ENCODE measurements at regions of chr6 and their contacts with region 1.

Region 1: GRCh38 chr6:12605888-12606345 is 110.7 kb upstream of the PHACTR1 start:
- DNase-seq: peak; percentile 90
- ATAC-seq: peak; percentile 66
- H3K4me3 ChIP-seq: 0 out of 2 replicates have a peak overlapping the region, but pooled peaks have one; percentile 28
- H3K27ac ChIP-seq: peak overlapping the region; percentile 41
- H3K4me1 ChIP-seq: peaks cover 46% of the 10 kb centered on the region
- H3K27me3 ChIP-seq: no peaks in the 10 kb centered on the region
- CTCF ChIP-seq: peak; percentile 70 to 87 (median 80); a peak in 5 of 6 replicates
- EP300 ChIP-seq: peak in 1 of 2 experiments; percentile 64; a peak in 2 of 4 replicates
- POLR2A ChIP-seq: no peak
- RAD21 ChIP-seq: peak; percentile 80

Region 2: DNA sequence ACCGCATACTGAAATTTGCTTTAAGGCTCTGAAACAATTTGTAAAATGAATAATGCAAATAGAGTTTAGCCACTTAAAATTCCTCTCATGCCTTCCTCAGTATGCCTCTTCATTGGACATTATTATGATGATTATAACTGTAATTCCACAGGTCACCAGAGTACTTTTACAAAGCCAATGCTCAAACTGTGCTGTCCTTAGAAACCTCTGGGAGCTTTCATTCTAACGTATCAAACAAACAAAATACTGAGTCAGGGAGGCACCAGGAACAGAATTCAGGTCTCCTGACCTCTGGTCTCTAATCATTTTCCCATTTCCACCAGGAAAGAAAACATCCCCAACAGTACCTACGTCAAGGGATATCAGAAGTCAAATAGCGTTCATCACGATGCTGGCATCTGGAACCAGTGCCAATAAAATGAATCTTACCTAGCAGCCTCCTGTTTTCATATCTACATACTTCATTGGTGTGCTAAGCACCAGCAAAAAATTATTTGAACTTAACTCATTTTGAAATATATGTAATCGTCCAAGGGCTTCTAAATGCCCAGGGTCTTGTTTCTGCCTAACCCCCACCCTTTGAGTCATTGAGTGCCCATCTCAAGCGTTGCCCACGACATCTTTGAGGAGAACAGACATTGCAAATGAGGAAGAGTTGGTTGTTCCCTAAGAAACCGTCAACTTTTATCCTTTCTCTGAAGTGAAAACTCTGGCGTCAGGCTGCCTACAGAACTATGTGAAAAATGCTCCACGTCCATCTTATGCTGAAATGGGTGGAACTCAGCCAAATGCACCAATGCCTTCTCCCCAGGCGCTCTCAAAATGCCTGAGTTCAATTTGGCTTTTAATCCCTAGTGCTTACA is 1411.3 kb before region 1 on chr6:
- CTCF ChIA-PET with region 1: no interaction called
- POLR2A ChIA-PET with region 1: no interaction called
- RAD21 ChIA-PET with region 1: no interaction called
- SMC1A ChIA-PET with region 1: no interaction called
- in situ Hi-C with region 1: no loop called
- intact Hi-C with region 1: no loop called
- DNase-seq: no peak
- ATAC-seq: no peak
- H3K4me3 ChIP-seq: no peak overlapping the region
- H3K27ac ChIP-seq: no peak overlapping the region
- H3K4me1 ChIP-seq: peaks cover 5% of the 10 kb centered on the region; the same call in 1 of the 2 replicates
- H3K27me3 ChIP-seq: no peaks in the 10 kb centered on the region
- CTCF ChIP-seq: no peak
- EP300 ChIP-seq: no peak
- POLR2A ChIP-seq: no peak
- RAD21 ChIP-seq: no peak

Region 3: DNA sequence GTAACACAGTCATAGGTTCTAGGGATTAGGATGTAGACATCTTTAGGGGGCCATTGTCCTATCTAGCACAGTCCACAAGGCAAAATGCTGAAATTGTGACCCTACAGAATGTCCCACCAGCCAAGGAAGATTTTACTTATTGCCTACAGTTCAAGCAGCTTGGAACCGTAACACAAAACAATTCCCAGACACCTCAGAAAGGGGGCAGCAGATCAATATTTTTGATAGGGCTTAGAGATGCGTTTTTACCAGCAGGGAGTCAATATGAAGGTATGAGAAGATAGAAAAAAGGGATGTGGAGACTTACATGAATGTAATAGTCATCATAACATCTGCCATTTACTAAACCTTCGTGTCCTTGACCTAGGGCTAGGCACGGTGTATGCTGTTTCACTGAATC is 987.4 kb before region 1 on chr6:
- CTCF ChIA-PET with region 1: interaction called, 4 read pairs
- POLR2A ChIA-PET with region 1: no interaction called
- RAD21 ChIA-PET with region 1: interaction called, 3 read pairs
- SMC1A ChIA-PET with region 1: interaction called, 3 read pairs
- in situ Hi-C with region 1: no loop called
- intact Hi-C with region 1: loop called (anchors 1 kb)
- DNase-seq: peak; percentile 13
- ATAC-seq: peak; percentile 92
- H3K4me3 ChIP-seq: no peak overlapping the region
- H3K27ac ChIP-seq: no peak overlapping the region
- H3K4me1 ChIP-seq: no peaks in the 10 kb centered on the region
- H3K27me3 ChIP-seq: no peaks in the 10 kb centered on the region
- CTCF ChIP-seq: peak; percentile 36 to 53 (median 51)
- EP300 ChIP-seq: no peak
- POLR2A ChIP-seq: no peak
- RAD21 ChIP-seq: peak; percentile 67; the same call in 1 of the 2 replicates

Region 4: GRCh38 chr6:11833626-11834592 is 772.0 kb before region 1 on chr6:
- CTCF ChIA-PET with region 1: no interaction called
- POLR2A ChIA-PET with region 1: no interaction called
- RAD21 ChIA-PET with region 1: no interaction called
- SMC1A ChIA-PET with region 1: interaction called, 5 read pairs
- in situ Hi-C with region 1: loop called (anchors 5 kb)
- intact Hi-C with region 1: loop called (anchors 5 kb)
- DNase-seq: peak; percentile 84
- ATAC-seq: peak; percentile 84
- H3K4me3 ChIP-seq: peak overlapping the region; percentile 0; the same call in 1 of the 2 replicates
- H3K27ac ChIP-seq: peak overlapping the region; percentile 95
- H3K4me1 ChIP-seq: peaks cover 45% of the 10 kb centered on the region
- H3K27me3 ChIP-seq: no peaks in the 10 kb centered on the region
- CTCF ChIP-seq: no peak
- EP300 ChIP-seq: peak; percentile 97 to 100
- POLR2A ChIP-seq: peak; percentile 41; the same call in 1 of the 2 replicates
- RAD21 ChIP-seq: peak; percentile 42; the same call in 1 of the 2 replicates

Region 5: DNA sequence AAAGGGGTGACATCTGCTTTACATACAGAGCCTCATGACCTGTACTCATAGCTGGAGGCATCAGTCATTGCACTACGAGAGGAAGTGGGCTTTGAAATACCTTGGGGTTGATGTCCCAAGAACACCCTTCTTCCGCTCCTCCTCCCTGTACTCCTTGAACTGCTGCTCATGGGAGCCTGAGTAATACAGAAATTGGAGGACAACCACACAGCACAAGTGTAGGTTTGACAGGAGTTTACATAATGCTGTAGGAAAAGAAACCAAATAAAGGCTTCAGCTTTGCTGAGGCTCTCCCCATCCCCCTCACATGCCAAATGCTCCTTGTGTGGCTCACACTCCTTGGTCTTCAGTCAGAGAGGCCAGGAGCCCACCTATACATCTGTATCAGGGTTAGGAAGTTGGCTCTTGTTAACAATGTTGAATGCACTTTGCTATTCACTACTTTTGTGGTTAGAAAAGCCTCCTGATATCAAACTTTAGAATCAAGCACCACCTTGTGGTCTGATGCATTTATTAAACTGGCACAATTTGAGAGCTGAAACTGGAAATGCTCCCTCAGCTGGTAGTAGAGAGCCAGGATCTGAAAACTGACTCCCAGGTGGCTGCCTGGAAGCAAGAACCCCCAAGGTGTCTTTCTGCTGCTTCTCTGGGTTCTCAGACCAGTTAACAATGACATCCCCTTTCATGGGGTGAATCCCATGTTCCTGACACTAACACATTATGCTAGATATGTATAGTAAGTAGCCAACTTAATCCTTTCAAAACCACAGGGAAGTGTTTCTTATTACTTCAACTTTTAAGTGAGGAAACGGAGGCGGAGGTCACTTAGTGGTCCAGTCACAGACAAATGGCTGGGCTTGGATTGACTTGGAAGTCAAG is 372.0 kb before region 1 on chr6:
- CTCF ChIA-PET with region 1: interaction called, 11 read pairs
- POLR2A ChIA-PET with region 1: no interaction called
- RAD21 ChIA-PET with region 1: interaction called, 5 read pairs
- SMC1A ChIA-PET with region 1: interaction called, 19 read pairs
- in situ Hi-C with region 1: no loop called
- intact Hi-C with region 1: loop called (anchors 2 kb)
- DNase-seq: peak; percentile 66
- ATAC-seq: peak; percentile 89
- H3K4me3 ChIP-seq: no peak overlapping the region
- H3K27ac ChIP-seq: peak overlapping the region; percentile 65
- H3K4me1 ChIP-seq: peaks cover 22% of the 10 kb centered on the region
- H3K27me3 ChIP-seq: no peaks in the 10 kb centered on the region
- CTCF ChIP-seq: peak; percentile 46 to 64 (median 54); a peak in 5 of 6 replicates
- EP300 ChIP-seq: no peak
- POLR2A ChIP-seq: no peak
- RAD21 ChIP-seq: peak; percentile 73

Region 6: DNA sequence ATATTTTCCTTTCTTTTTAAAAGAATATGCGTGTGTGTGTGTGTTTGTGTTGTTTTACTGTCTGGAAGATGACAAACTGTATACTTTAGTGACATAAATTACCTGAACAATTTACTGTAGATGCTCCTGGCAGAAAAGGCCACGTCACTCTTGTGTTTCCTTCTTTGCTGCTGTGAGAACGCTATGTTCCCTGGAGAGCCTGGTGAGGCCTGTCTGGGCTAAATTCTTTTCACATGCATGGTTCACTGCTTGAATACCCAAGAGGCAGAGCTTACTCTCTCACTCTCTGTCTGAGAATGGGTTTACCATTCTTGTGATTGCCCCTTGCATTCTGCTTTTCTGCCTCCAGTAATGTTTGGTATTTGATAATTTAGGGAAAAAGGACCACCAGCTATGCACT is 251.4 kb before region 1 on chr6:
- CTCF ChIA-PET with region 1: interaction called, 11 read pairs
- POLR2A ChIA-PET with region 1: interaction called, 5 read pairs
- RAD21 ChIA-PET with region 1: interaction called, 182 read pairs
- SMC1A ChIA-PET with region 1: interaction called, 172 read pairs
- in situ Hi-C with region 1: loop called (anchors 5 kb)
- intact Hi-C with region 1: loop called (anchors 2 kb)
- DNase-seq: peak; percentile 91
- ATAC-seq: peak; percentile 77
- H3K4me3 ChIP-seq: no peak overlapping the region
- H3K27ac ChIP-seq: peak overlapping the region; percentile 56
- H3K4me1 ChIP-seq: peaks cover 47% of the 10 kb centered on the region
- H3K27me3 ChIP-seq: no peaks in the 10 kb centered on the region
- CTCF ChIP-seq: no peak
- EP300 ChIP-seq: peak; percentile 43 to 56; a peak in 2 of 4 replicates
- POLR2A ChIP-seq: no peak
- RAD21 ChIP-seq: no peak

Region 7: GRCh38 chr6:12483712-12484111 is 122.2 kb before region 1 on chr6:
- CTCF ChIA-PET with region 1: interaction called, 25 read pairs
- POLR2A ChIA-PET with region 1: interaction called, 6 read pairs
- RAD21 ChIA-PET with region 1: interaction called, 25 read pairs
- SMC1A ChIA-PET with region 1: interaction called, 10 read pairs
- in situ Hi-C with region 1: no loop called
- intact Hi-C with region 1: no loop called
- DNase-seq: peak; percentile 64
- ATAC-seq: peak; percentile 94
- H3K4me3 ChIP-seq: peak overlapping the region; percentile 27; the same call in 1 of the 2 replicates
- H3K27ac ChIP-seq: no peak overlapping the region
- H3K4me1 ChIP-seq: peaks cover 7% of the 10 kb centered on the region; the same call in 1 of the 2 replicates
- H3K27me3 ChIP-seq: no peaks in the 10 kb centered on the region
- CTCF ChIP-seq: no peak
- EP300 ChIP-seq: no peak
- POLR2A ChIP-seq: no peak
- RAD21 ChIP-seq: no peak

Region 8: DNA sequence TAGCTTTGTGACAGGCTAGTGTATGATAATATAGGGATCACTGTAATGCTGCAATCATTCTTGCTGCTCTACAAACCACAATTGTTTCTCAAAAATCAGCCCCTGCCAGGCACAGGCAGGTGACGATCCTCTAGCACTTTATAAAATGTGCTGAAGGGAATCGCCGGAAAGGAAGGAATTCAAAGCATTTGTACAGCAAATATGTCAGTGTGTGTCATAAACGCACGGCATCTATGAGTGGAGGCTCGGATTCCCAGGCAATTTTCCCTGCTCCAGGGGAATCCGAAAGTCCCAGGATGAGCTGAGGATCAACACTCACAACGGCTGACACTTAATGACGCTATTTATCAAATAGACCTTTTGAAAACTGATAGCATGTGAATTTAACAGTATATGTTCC is 112.1 kb after region 1 on chr6:
- CTCF ChIA-PET with region 1: no interaction called
- POLR2A ChIA-PET with region 1: no interaction called
- RAD21 ChIA-PET with region 1: no interaction called
- SMC1A ChIA-PET with region 1: no interaction called
- in situ Hi-C with region 1: no loop called
- intact Hi-C with region 1: no loop called
- DNase-seq: no peak
- ATAC-seq: no peak
- H3K4me3 ChIP-seq: no peak overlapping the region
- H3K27ac ChIP-seq: no peak overlapping the region
- H3K4me1 ChIP-seq: no peaks in the 10 kb centered on the region
- H3K27me3 ChIP-seq: no peaks in the 10 kb centered on the region; a peak in 1 of 4 replicates
- CTCF ChIP-seq: no peak
- EP300 ChIP-seq: no peak
- POLR2A ChIP-seq: no peak
- RAD21 ChIP-seq: no peak

Region 9: GRCh38 chr6:12890171-12890790 is 284.4 kb after region 1 on chr6:
- CTCF ChIA-PET with region 1: interaction called, 10 read pairs
- POLR2A ChIA-PET with region 1: interaction called, 3 read pairs
- RAD21 ChIA-PET with region 1: interaction called, 6 read pairs
- SMC1A ChIA-PET with region 1: interaction called, 7 read pairs
- in situ Hi-C with region 1: no loop called
- intact Hi-C with region 1: no loop called
- DNase-seq: no peak
- ATAC-seq: peak; percentile 65
- H3K4me3 ChIP-seq: no peak overlapping the region
- H3K27ac ChIP-seq: no peak overlapping the region
- H3K4me1 ChIP-seq: no peaks in the 10 kb centered on the region
- H3K27me3 ChIP-seq: no peaks in the 10 kb centered on the region; a peak in 2 of 4 replicates
- CTCF ChIP-seq: peak; percentile 32 to 64 (median 55)
- EP300 ChIP-seq: no peak
- POLR2A ChIP-seq: no peak
- RAD21 ChIP-seq: no peak